Ascending aorta (tissue), 2 donors: ENCODE measurements at regions of chr13 and their contacts with region 1.

Region 1: DNA sequence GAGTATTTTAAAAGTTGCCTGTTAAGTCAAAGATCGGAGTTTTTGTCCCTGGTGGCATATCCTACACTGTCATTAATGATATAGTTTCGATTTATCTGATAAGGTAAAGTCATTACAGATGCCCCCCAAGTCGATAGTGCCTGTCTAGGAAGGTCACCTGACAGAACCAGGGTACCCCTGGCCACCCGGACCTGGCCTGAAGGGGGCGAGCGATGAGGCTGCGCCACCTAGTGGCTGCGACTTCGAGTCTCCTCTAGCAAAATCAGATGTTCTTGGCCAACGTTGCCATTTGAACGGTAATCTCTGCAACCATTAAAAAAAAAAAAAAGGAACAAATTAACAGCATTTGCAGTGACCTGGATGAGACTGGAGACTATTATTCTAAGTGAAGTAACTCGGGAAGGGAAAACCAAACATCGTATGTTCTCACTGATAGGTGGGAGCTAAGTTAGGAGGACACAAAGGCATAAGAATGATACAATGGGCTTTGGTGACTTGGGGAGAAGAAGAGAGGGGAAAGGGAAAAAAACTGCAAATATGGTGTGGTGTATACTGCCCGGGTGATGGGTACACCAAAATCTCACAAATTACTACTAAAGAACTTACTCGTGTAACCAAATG is 565.1 kb downstream of the LIG4 start:
- DNase-seq: no peak
- H3K4me3 ChIP-seq: no peak overlapping the region
- H3K27ac ChIP-seq: no peak overlapping the region
- H3K4me1 ChIP-seq: no peaks in the 10 kb centered on the region
- H3K27me3 ChIP-seq: no peaks in the 10 kb centered on the region
- CTCF ChIP-seq: peak; percentile 58 to 77 (median 61)

Region 2: GRCh38 chr13:107211073-107211472 is 439.1 kb before region 1 on chr13:
- intact Hi-C with region 1: loop called (anchors 2 kb)
- DNase-seq: peak in 1 of 2 donors; percentile 78
- H3K4me3 ChIP-seq: peak overlapping the region; percentile 33
- H3K27ac ChIP-seq: no peak overlapping the region
- H3K4me1 ChIP-seq: peaks cover 0 to 7% of the 10 kb centered on the region in 2 donors
- H3K27me3 ChIP-seq: no peaks in the 10 kb centered on the region
- CTCF ChIP-seq: peak; percentile 51 to 86 (median 84)

Region 3: GRCh38 chr13:107373551-107373950 is 276.6 kb before region 1 on chr13:
- intact Hi-C with region 1: loop called (anchors 1 kb)
- DNase-seq: no peak
- H3K4me3 ChIP-seq: no peak overlapping the region
- H3K27ac ChIP-seq: no peak overlapping the region
- H3K4me1 ChIP-seq: no peaks in the 10 kb centered on the region
- H3K27me3 ChIP-seq: no peaks in the 10 kb centered on the region
- CTCF ChIP-seq: peak; percentile 28 to 68 (median 49)

Region 4: GRCh38 chr13:107441279-107441678 is 208.9 kb before region 1 on chr13:
- intact Hi-C with region 1: no loop called
- DNase-seq: no peak
- H3K4me3 ChIP-seq: no peak overlapping the region
- H3K27ac ChIP-seq: no peak overlapping the region
- H3K4me1 ChIP-seq: peaks cover 0 to 4% of the 10 kb centered on the region in 2 donors
- H3K27me3 ChIP-seq: no peaks in the 10 kb centered on the region
- CTCF ChIP-seq: no peak

Region 5: GRCh38 chr13:107600971-107601370 is 49.2 kb before region 1 on chr13:
- intact Hi-C with region 1: no loop called
- DNase-seq: no peak
- H3K4me3 ChIP-seq: no peak overlapping the region
- H3K27ac ChIP-seq: no peak overlapping the region
- H3K4me1 ChIP-seq: no peaks in the 10 kb centered on the region
- H3K27me3 ChIP-seq: no peaks in the 10 kb centered on the region
- CTCF ChIP-seq: no peak

Region 6: DNA sequence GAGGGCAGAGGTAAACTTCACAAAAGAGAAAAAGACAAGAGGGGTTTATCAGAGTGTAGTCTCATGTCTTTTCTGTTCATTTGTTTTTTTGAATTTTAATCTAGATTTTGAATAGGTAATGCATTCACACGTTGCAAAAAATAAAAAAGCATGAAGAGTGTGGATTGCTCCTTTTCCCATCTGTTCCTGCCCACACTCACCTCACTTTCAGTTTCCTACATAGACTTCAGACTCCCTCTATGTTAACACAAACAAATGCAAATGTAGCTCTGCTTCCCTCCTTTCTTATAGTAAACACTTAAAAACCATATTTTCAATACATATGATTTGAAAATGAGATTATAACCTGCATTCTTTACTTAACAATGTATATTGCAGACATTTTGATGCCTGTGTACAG is 639.6 kb after region 1 on chr13:
- intact Hi-C with region 1: no loop called
- DNase-seq: no peak
- H3K4me3 ChIP-seq: no peak overlapping the region
- H3K27ac ChIP-seq: no peak overlapping the region
- H3K4me1 ChIP-seq: no peaks in the 10 kb centered on the region
- H3K27me3 ChIP-seq: no peaks in the 10 kb centered on the region
- CTCF ChIP-seq: no peak